Naive thymus-derived CD4-positive, alpha-beta T cell (primary cell): ENCODE measurements at regions of chr19 and their contacts with region 1.

Region 1: DNA sequence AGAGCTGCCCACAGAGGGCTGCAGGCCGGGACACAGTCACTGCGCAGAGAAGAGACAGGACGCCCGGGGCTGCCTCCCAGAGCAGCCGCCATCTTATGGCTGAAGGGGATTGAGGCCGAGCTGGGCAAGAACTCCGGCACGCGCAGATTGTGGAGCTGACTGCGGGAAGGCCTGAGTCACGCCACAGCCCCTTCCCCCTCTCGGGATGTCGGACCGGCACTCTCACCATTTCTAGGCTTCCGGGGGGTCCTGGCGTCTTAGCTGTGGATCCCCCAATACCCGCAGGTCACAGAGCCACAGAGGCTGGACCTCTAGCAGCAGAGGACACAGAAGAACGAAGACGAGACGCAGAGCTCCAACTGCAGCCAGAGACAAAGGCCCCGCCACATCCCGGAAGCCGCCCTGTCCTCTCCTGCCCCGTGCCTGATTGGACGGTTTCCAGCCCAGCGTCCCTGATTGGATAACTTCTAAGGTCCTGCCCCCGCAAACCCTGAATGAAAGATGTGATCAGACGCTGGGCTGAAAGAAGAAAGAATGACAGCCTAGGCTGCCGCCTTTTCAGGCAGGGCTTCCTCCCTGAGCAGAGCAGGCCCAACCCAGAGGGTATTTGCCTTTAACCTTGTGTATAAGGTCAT is at the start of gene ZNF43:
- DNase-seq: peak; percentile 76 to 96 (median 93)
- ATAC-seq: peak; percentile 99
- H3K4me3 ChIP-seq: peak within 1 kb of the TSS; percentile 97
- H3K4me3 Mint-ChIP-seq: peak within 1 kb of the TSS; percentile 93 to 99 (median 98)
- H3K27ac ChIP-seq: peak within 1 kb of the TSS; percentile 88
- H3K27ac Mint-ChIP-seq: peak within 1 kb of the TSS; percentile 96 to 99 (median 98)
- H3K4me1 ChIP-seq: peaks cover 5 to 9% of the 10 kb centered on the region in 2 donors
- H3K4me1 Mint-ChIP-seq: peaks cover 3 to 48% (median 35%) of the 10 kb centered on the region in 7 donors
- H3K27me3 ChIP-seq: no peaks in the 10 kb centered on the region
- H3K27me3 Mint-ChIP-seq: no peaks in the 10 kb centered on the region
- total RNA-seq, gene ZNF43: 20.5 to 39.3 (median 36.2) TPM

Region 2: GRCh38 chr19:20661150-20661819 is 1174.6 kb before region 1 on chr19 and contains the start of gene ZNF626:
- CTCF ChIA-PET with region 1: no interaction called
- POLR2A ChIA-PET with region 1: interaction called, 3 read pairs
- intact Hi-C with region 1: loop called in 1 of 2 experiments (anchors 10 kb)
- DNase-seq: peak; percentile 66 to 92 (median 87)
- ATAC-seq: peak; percentile 99
- H3K4me3 ChIP-seq: peak within 1 kb of the TSS; percentile 89
- H3K4me3 Mint-ChIP-seq: peak within 1 kb of the TSS; percentile 83 to 97 (median 92)
- H3K27ac ChIP-seq: peak within 1 kb of the TSS; percentile 91
- H3K27ac Mint-ChIP-seq: peak within 1 kb of the TSS; percentile 86 to 97 (median 95)
- H3K4me1 ChIP-seq: peaks cover 0 to 6% of the 10 kb centered on the region in 2 donors
- H3K4me1 Mint-ChIP-seq: peaks cover 0 to 54% (median 47%) of the 10 kb centered on the region in 7 donors
- H3K27me3 ChIP-seq: no peaks in the 10 kb centered on the region
- H3K27me3 Mint-ChIP-seq: no peaks in the 10 kb centered on the region
- total RNA-seq, gene ZNF626: 2.2 to 20.0 (median 12.4) TPM

Region 3: DNA sequence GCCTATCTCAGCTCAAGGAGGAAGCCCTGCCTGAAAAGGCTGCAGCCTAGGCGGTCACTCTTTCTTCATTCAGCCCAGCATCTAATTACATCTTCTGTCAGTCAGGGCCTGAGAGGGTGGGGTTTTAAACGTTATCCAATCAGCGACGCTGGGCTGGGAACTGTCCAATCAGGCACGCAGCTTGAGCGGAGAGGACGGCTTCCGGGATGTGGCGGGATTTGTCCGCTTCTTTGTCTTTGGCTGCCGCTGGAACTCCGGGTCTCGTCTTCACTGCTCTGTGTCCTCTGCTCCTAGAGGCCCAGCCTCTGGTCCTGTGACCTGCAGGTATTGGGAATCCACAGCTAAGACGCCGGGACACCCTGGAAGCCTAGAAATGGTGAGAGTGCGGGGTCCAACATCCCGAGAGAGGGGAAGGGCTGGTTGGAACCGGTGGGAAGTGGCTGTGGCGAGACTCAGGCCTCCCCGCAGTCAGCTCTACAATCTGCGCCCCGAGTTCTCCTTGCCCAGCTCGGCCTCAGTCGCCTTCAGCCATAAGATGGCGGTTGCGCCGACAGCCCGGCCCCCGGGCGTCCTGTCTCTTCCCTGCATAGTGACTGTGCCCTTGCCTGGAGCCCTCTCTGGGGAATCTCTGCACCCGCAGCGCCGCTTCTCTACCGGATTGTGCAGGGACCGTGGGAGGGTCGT is 477.0 kb before region 1 on chr19 and contains the start of gene ZNF738:
- CTCF ChIA-PET with region 1: no interaction called
- POLR2A ChIA-PET with region 1: interaction called, 3 read pairs
- intact Hi-C with region 1: loop called in 1 of 2 experiments (anchors 1 kb)
- DNase-seq: peak; percentile 59 to 87 (median 76)
- ATAC-seq: peak; percentile 98
- H3K4me3 ChIP-seq: peak within 1 kb of the TSS; percentile 98
- H3K4me3 Mint-ChIP-seq: peak within 1 kb of the TSS; percentile 93 to 99 (median 98)
- H3K27ac ChIP-seq: peak within 1 kb of the TSS; percentile 77
- H3K27ac Mint-ChIP-seq: peak within 1 kb of the TSS; percentile 85 to 98 (median 91)
- H3K4me1 ChIP-seq: peaks cover 0 to 6% of the 10 kb centered on the region in 2 donors
- H3K4me1 Mint-ChIP-seq: peaks cover 6 to 17% (median 14%) of the 10 kb centered on the region in 7 donors
- H3K27me3 ChIP-seq: no peaks in the 10 kb centered on the region
- H3K27me3 Mint-ChIP-seq: no peaks in the 10 kb centered on the region
- total RNA-seq, gene ZNF738: 6.4 to 11.4 (median 9.8) TPM

Region 4: DNA sequence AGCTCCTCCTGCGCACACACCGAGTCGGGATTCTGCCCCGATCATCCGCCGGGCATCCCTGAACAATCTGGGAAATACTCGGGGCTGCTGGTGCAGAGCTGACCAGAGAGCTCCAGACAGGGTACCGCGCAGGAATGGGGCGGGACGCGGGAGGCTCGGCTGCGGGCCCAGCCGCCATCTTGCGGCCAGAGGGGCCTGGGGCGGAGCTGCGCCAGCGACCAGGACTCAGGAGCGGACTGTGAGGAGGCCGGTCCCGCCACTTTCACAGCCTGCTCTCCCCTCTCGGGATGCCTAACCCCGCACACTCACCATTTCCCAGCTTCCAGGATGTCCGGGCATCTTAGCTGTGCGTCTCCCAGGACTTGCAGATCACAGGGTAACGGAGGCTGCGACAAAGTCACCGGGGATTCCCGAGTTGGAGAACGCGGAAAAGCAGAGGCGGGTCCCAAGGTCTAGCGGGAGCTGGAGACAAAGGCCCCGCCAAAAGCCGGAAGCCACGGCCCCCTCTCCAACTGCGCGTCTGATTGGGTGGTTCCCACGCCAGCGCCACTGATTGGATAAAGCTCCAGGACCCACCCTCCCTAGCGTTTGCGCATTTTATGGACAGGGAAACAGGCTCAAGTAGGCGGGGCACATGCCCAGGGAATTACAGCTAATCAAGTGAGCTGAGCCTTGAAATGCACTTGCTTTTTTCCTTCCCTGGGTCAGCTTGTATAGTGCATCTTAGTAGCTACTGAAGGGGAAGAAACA is 15.8 kb after region 1 on chr19:
- CTCF ChIA-PET with region 1: interaction called, 7 read pairs
- POLR2A ChIA-PET with region 1: interaction called, 79 read pairs
- intact Hi-C with region 1: loop called (anchors 1 kb)
- DNase-seq: peak; percentile 71 to 90 (median 88)
- ATAC-seq: peak; percentile 99
- H3K4me3 ChIP-seq: peak overlapping the region; percentile 98
- H3K4me3 Mint-ChIP-seq: peak overlapping the region; percentile 89 to 96 (median 92)
- H3K27ac ChIP-seq: peak overlapping the region; percentile 90
- H3K27ac Mint-ChIP-seq: peak overlapping the region; percentile 68 to 96 (median 92)
- H3K4me1 ChIP-seq: peaks cover 6 to 10% of the 10 kb centered on the region in 2 donors
- H3K4me1 Mint-ChIP-seq: peaks cover 8 to 34% (median 27%) of the 10 kb centered on the region in 7 donors
- H3K27me3 ChIP-seq: no peaks in the 10 kb centered on the region
- H3K27me3 Mint-ChIP-seq: peaks cover 0 to 1% (median 0%) of the 10 kb centered on the region in 5 donors

Region 5: GRCh38 chr19:23395041-23395721 is 1559.3 kb after region 1 on chr19 and contains the start of gene ZNF91:
- CTCF ChIA-PET with region 1: no interaction called
- POLR2A ChIA-PET with region 1: no interaction called
- intact Hi-C with region 1: loop called (anchors 2 to 5 kb)
- DNase-seq: peak; percentile 73 to 96 (median 92)
- ATAC-seq: peak; percentile 98
- H3K4me3 ChIP-seq: peak within 1 kb of the TSS; percentile 96
- H3K4me3 Mint-ChIP-seq: peak within 1 kb of the TSS; percentile 96 to 99 (median 98)
- H3K27ac ChIP-seq: peak within 1 kb of the TSS; percentile 96
- H3K27ac Mint-ChIP-seq: peak within 1 kb of the TSS; percentile 94 to 99 (median 98)
- H3K4me1 ChIP-seq: peaks cover 12% of the 10 kb centered on the region in 2 donors
- H3K4me1 Mint-ChIP-seq: peaks cover 4 to 43% (median 37%) of the 10 kb centered on the region in 7 donors
- H3K27me3 ChIP-seq: no peaks in the 10 kb centered on the region
- H3K27me3 Mint-ChIP-seq: no peaks in the 10 kb centered on the region
- total RNA-seq, gene ZNF91: 40.5 to 165 (median 90.6) TPM